Calu3 (cell line): ENCODE measurements at regions of chr4 and their contacts with region 1.

Region 1: DNA sequence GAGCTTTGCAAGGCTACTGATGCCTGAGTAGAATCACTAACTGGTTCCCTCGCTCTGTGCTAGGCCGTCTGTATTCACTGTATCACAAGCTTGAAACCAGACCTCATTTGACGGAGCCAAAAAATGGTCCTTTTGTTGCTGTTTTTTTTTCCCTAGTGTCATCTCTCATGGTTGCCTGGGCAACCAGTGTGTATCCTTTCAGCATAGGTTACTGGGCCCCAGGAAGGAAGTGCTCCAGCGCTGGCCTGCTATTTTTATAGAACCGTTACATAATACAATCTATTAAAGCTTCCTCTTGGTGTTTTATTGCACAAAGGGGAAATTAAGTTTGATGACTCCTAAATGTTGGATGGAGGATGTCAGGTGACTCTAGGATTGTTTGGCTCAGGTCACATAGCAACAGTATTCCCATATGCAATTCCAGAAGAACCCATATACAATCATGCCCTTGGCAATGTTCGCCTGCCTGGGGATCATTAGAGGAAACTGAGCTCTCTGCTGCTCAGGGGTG is 220.4 kb downstream of the SPRY1 start:
- DNase-seq: no peak
- H3K4me3 Mint-ChIP-seq: no peak overlapping the region
- H3K27ac Mint-ChIP-seq: no peak overlapping the region
- H3K4me1 Mint-ChIP-seq: peaks cover 23% of the 10 kb centered on the region
- H3K27me3 Mint-ChIP-seq: no peaks in the 10 kb centered on the region
- CTCF ChIP-seq: no peak

Region 2: GRCh38 chr4:123628288-123628687 is 11.3 kb after region 1 on chr4:
- CTCF ChIA-PET with region 1: no interaction called
- intact Hi-C with region 1: loop called (anchors 1 kb)
- DNase-seq: no peak
- H3K4me3 Mint-ChIP-seq: no peak overlapping the region
- H3K27ac Mint-ChIP-seq: no peak overlapping the region
- H3K4me1 Mint-ChIP-seq: no peaks in the 10 kb centered on the region
- H3K27me3 Mint-ChIP-seq: no peaks in the 10 kb centered on the region
- CTCF ChIP-seq: no peak